Posterior cingulate gyrus (tissue), 11 donors: ENCODE measurements at regions of chr15 and their contacts with region 1.

Region 1: DNA sequence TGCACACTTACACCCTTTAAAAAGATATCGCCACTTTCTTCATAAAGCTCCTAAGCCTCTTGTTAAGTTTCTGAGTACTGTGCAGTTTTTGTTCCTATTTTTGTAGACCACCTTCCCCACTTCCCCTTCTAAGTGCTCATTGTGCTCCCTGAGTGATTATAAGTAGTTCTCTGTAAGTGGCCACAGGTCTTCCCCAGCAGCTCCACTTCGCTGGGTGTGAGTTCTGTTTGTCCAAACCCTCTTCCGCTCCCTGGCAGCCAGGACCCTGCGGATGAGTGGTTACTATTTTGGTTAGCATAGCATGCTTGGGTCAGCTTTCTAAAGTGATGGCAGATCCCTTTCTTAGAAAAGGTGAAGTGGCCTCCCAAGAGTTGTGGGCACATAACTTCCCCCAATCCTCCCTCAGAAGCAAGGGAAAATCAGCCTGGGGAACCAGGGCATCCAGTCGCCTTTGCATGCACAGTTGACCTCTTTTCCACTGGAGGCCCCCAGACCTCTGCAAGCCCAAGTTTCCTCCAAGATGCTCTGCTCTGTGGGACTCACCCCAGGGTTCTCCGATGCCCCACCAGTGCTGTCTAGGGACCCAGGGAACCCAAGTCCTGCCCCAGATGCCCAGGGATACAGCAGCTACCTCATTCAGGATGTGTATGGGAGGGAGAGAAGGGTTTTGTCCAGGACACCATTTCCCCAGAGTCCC is 69.6 kb downstream of the ATP10A start:
- DNase-seq: peak in 1 of 10 donors; percentile 44

Region 2: GRCh38 chr15:25829073-25829472 is 35.6 kb after region 1 on chr15:
- intact Hi-C with region 1: loop called (anchors 2 kb)
- DNase-seq: no peak